ENCODE measurements at regions of chr18 and their contacts with region 1.

Region 1: DNA sequence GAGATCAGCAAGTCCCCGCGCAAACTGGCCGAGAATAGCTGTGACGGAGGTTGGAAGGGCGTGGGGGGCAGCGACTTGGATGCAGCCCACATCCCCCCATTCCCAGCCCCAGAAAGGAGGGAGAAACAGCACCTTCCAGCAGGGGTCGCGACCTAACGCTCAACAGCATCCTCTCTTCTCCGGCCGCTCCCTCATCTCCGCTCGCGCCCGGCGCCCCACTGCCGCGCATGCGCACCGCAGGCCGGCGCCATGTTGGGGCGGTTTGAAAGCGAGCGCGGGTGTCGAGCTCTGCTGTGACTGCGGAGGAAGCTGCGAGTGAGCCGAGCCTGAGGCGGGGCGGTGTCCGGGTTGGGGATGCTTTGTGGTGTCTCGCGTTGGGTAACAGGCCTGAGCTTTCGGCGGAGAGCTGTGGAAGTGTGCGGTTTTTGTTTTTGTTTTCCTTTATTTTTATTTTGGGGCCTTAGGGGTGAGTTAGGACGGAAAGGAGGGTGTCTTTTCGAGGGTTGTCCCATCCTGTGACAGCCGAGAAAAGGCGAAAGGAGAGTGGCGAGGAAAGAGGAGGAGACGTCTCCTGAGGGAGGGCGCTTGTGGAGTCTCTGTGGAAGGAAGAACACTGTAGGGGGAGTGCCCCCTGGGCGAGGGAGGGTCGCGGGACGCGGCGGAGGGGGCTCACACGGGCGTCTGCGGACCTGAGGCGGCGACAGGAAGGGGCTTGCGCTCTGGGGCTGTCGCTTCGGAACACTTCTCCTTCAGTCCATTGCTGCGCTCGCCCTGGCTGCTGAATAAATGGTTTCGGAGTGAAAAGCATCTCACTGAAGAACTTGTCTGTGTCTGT is at the starts of genes C18orf54 and STARD6:
- DNase-seq: peak; percentile 94
- total RNA-seq, gene C18orf54: 1.4 TPM
- total RNA-seq, gene STARD6: not detected

Region 2: GRCh38 chr18:54224379-54225014 is 133.4 kb before region 1 on chr18 and contains the start of gene MBD2:
- intact Hi-C with region 1: loop called (anchors 5 kb)
- DNase-seq: peak; percentile 96
- total RNA-seq, gene MBD2: 33.4 TPM

Region 3: GRCh38 chr18:54269893-54270844 is 87.7 kb before region 1 on chr18:
- intact Hi-C with region 1: loop called (anchors 2 kb)
- DNase-seq: peak; percentile 79